ENCODE measurements at regions of chr13 and their contacts with region 1.

Region 1: DNA sequence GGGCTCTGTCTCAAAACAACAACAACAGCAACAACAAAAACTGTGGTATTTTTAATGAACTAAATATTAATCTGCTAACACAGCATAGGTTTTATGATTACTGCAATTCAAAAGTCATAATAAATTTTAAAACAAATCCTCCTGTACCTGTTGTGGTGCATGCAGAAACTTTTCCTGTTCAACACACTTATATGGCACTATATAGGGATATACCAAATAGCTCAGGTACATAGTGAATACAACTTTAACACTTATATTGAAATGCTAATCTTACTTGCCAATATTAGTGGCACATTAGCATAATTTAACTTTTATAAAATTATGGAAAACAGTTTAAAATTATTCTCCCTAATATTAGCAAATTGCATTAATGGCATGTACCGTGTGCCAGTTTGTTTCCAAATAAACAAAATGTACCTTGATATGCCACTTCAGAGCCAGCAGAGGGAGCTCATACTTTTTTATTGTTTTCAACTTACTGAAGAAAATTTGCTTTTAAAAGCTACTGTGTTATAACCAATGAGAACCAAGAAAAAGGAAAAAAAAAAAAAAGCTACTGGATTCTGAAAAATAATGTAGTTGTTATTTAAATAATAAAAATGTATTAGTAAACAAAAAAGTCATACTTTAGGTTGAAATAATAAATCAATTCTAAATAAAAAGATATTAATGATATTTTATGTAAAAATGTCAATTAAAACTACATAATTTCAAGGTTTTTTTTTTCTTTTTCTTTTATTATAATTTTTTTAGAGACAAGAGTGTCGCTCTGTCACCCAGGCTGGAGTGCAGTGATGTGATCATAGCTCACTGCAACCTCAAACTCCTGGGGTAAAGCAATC is 18.0 kb upstream of the RBM26 start:
- DNase-seq: no peak
- ATAC-seq: peak; percentile 66
- H3K4me3 Mint-ChIP-seq: no peak overlapping the region
- H3K27ac Mint-ChIP-seq: no peak overlapping the region
- H3K4me1 Mint-ChIP-seq: peaks cover 11% of the 10 kb centered on the region
- H3K27me3 Mint-ChIP-seq: no peaks in the 10 kb centered on the region

Region 2: GRCh38 chr13:79258489-79258888 is 165.5 kb before region 1 on chr13:
- CTCF ChIA-PET with region 1: no interaction called
- DNase-seq: no peak
- ATAC-seq: no peak
- H3K4me3 Mint-ChIP-seq: no peak overlapping the region
- H3K27ac Mint-ChIP-seq: no peak overlapping the region
- H3K4me1 Mint-ChIP-seq: peaks cover 4% of the 10 kb centered on the region
- H3K27me3 Mint-ChIP-seq: peaks cover 7% of the 10 kb centered on the region

Region 3: GRCh38 chr13:79405829-79406596 is 18.0 kb before region 1 on chr13 and contains the start of gene RBM26:
- CTCF ChIA-PET with region 1: interaction called, 11 read pairs
- DNase-seq: peak; percentile 97
- ATAC-seq: peak; percentile 88
- H3K4me3 Mint-ChIP-seq: no peak within 1 kb of the TSS
- H3K27ac Mint-ChIP-seq: peak within 1 kb of the TSS; percentile 96
- H3K4me1 Mint-ChIP-seq: peaks cover 40% of the 10 kb centered on the region
- H3K27me3 Mint-ChIP-seq: no peaks in the 10 kb centered on the region
- total RNA-seq, gene RBM26: 65.2 to 66.0 TPM

Region 4: GRCh38 chr13:79434556-79434955 is 10.5 kb after region 1 on chr13:
- CTCF ChIA-PET with region 1: interaction called, 17 read pairs
- DNase-seq: no peak
- ATAC-seq: no peak
- H3K4me3 Mint-ChIP-seq: no peak overlapping the region
- H3K27ac Mint-ChIP-seq: no peak overlapping the region
- H3K4me1 Mint-ChIP-seq: no peaks in the 10 kb centered on the region
- H3K27me3 Mint-ChIP-seq: no peaks in the 10 kb centered on the region

Region 5: DNA sequence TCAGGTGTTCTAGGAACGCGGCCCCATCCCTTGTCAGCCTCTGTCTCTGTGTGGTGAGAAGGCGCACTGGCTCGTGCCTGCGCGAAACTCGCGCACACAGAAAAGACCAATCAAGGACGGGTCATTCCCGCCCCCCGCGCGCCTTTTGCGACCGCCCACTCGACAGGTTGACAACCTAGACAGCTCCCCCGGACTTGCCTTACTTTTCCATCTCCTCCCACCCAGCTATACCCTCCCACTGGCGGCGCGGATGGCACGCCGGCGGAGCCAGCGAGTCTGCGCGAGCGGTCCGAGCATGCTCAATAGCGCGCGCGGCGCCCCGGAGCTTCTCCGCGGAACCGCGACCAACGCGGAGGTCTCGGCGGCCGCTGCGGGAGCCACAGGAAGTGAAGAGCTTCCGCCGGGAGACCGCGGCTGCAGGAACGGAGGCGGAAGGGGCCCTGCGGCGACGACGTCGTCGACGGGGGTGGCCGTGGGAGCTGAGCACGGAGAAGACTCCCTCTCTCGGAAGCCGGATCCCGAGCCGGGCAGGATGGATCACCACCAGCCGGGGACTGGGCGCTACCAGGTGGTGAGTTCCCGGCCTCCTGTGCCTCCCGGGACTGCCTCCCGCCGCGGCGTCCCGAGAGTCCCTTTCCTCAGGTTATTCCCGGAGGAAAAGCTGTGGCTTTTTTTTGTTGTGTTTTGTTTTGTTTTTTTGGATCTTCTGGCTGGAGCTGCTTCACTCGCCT is 57.1 kb after region 1 on chr13 and contains the start of gene NDFIP2:
- CTCF ChIA-PET with region 1: interaction called, 41 read pairs
- DNase-seq: peak; percentile 91
- ATAC-seq: peak; percentile 83
- H3K4me3 Mint-ChIP-seq: peak within 1 kb of the TSS; percentile 91
- H3K27ac Mint-ChIP-seq: peak within 1 kb of the TSS; percentile 84
- H3K4me1 Mint-ChIP-seq: peaks cover 52% of the 10 kb centered on the region
- H3K27me3 Mint-ChIP-seq: peaks cover 12% of the 10 kb centered on the region
- total RNA-seq, gene NDFIP2: 50.8 to 124 TPM

Region 6: DNA sequence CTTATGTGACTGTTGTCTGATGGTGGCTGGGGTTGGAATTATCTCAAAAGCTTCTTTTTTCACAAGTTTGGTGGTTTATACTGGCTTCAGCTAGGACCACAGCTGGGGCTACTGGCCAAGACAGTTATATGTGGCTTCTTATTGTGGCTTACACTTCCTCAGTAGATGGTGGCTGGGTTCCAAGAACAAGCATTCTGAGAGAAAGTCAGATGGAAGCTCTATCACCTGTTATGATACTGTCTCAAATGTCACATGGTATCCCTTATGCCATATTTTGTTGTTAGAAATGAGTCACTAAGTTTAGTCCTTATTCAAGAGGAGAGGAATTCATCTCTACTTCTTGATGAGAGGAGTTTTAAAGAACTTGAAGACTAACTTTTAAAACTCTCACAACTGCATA is 98.6 kb after region 1 on chr13:
- CTCF ChIA-PET with region 1: interaction called, 13 read pairs
- DNase-seq: peak; percentile 85
- ATAC-seq: peak; percentile 87
- H3K4me3 Mint-ChIP-seq: peak overlapping the region; percentile 37
- H3K27ac Mint-ChIP-seq: peak overlapping the region; percentile 93
- H3K4me1 Mint-ChIP-seq: peaks cover 43% of the 10 kb centered on the region
- H3K27me3 Mint-ChIP-seq: no peaks in the 10 kb centered on the region

Region 7: GRCh38 chr13:79533781-79534400 is 109.9 kb after region 1 on chr13:
- CTCF ChIA-PET with region 1: interaction called, 129 read pairs
- DNase-seq: no peak
- ATAC-seq: no peak
- H3K4me3 Mint-ChIP-seq: no peak overlapping the region
- H3K27ac Mint-ChIP-seq: no peak overlapping the region
- H3K4me1 Mint-ChIP-seq: peaks cover 45% of the 10 kb centered on the region
- H3K27me3 Mint-ChIP-seq: no peaks in the 10 kb centered on the region

Region 8: DNA sequence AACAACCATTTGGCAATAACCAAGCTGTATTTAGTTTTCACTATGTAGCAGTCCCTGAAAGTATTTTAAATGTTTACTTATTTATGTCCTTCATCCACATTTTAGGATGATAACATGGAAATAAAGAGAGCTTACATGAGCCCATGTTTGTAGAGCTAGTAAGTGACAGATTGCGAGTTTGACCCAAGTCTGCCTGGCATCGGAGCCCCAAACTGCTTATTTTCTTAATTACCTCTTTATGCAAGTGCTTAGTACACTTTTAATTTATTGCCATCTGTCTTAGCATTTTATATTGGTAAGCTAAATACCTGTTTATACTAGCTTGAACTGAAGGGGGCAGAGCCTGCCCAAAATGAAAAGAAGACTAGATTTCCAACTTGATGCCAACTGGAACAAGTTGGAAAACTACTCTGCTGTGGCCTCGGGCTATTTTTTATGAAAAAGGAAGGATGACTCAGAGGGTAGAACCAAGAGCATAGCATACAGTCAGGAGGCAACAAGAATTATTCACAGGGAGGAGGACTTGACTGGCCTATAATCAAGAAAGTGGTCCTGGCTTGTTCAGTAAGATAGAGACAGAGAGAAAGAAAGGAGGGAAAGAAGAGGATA is 207.1 kb after region 1 on chr13:
- CTCF ChIA-PET with region 1: no interaction called
- DNase-seq: no peak
- ATAC-seq: no peak
- H3K4me3 Mint-ChIP-seq: no peak overlapping the region
- H3K27ac Mint-ChIP-seq: no peak overlapping the region
- H3K4me1 Mint-ChIP-seq: no peaks in the 10 kb centered on the region
- H3K27me3 Mint-ChIP-seq: peaks cover 5% of the 10 kb centered on the region

Measured in activated CD8-positive, alpha-beta memory T cell treated with anti-CD3 and anti-CD28 coated beads, Interleukin-2, amount 10 ng/mL, durations not matched to agents 7 days and 5 days (primary cell).